ENCODE measurements at regions of chr3 and their contacts with region 1.

Region 1: GRCh38 chr3:45210308-45211041 is 15.6 kb downstream of the TMEM158 start:
- DNase-seq: no peak
- H3K4me3 ChIP-seq: no peak overlapping the region
- H3K27me3 ChIP-seq: no peaks in the 10 kb centered on the region
- CTCF ChIP-seq: peak; percentile 97

Region 2: DNA sequence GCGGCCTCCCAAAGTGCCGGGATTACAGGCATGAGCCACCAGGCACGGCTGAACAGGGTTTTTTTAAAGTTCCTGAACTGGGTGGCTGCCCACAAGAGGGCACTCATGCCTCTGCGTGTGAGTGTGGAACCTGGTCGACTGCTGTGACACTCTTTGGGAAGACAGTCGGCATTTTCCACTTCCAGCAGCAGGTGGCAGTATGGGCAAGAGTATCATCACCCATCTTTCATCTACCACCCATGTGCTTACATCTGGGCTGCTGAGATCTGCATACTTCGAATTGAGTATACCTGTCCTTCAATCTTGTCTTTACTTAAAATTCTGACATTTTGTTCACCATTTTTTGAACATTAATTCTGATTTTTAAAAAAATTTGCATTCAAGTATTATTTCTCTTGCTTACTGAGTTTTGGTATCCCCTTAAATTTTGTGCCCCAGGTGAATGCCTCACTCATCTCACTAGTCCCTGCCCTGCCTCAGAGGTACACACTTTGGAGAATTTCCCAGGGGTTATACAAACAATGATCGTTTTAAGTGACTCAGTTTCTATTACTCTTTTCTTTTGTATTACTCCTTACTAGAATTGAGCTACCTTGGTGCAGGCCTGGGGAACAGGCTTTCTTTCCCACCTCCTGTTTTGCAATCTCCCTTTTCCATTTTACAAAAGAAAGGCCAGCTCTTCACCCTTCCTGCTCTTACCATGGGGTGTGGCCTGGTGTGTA is 172.6 kb before region 1 on chr3:
- CTCF ChIA-PET with region 1: interaction called, 289 read pairs
- POLR2A ChIA-PET with region 1: interaction called, 11 read pairs
- DNase-seq: peak; percentile 59
- H3K4me3 ChIP-seq: no peak overlapping the region
- H3K27me3 ChIP-seq: no peaks in the 10 kb centered on the region
- CTCF ChIP-seq: peak; percentile 89

Region 3: DNA sequence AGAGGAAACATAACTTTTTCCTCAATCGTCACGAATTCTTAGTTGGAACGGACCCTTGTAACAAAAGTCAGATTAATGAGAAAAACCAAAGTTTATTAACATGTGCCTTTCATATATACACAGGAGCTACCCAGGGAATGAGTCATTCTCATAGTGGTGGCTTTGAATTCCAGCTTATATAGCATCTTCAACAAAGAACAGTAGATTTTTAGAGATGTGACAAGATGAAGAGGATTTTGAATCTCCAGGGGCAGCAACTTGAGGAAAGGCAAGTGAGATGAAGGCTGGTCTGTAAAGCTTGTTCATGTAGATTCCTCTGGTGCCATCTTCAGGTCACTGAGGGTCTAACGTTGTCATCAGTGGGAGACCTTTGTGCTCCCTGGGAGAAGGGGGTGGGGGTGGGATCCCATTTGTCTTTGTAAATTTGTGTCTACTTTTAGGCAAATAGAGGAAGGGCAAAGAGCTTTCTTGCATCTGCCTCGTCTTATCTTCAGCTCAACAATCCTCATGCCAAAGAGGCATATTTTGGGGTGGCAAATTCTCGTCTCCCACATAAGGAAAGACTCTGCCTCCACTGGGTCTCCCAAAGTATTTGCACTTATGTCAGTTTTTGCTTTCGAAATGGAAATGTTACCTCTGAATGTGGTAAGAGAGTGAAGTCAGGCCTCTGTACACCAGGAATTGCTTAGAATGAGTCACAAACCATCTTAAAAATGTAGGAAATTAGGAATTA is 154.9 kb before region 1 on chr3:
- CTCF ChIA-PET with region 1: interaction called, 289 read pairs
- POLR2A ChIA-PET with region 1: no interaction called
- DNase-seq: peak; percentile 43
- H3K4me3 ChIP-seq: no peak overlapping the region
- H3K27me3 ChIP-seq: no peaks in the 10 kb centered on the region
- CTCF ChIP-seq: peak; percentile 10; the same call in 1 of the 2 replicates

Region 4: GRCh38 chr3:45140141-45140784 is 70.2 kb before region 1 on chr3:
- CTCF ChIA-PET with region 1: interaction called, 18 read pairs
- POLR2A ChIA-PET with region 1: no interaction called
- DNase-seq: no peak
- H3K4me3 ChIP-seq: no peak overlapping the region
- H3K27me3 ChIP-seq: no peaks in the 10 kb centered on the region
- CTCF ChIP-seq: no peak

Region 5: GRCh38 chr3:45224824-45225464 is 14.5 kb after region 1 on chr3:
- CTCF ChIA-PET with region 1: interaction called, 26 read pairs
- POLR2A ChIA-PET with region 1: no interaction called
- DNase-seq: no peak
- H3K4me3 ChIP-seq: peak overlapping the region; percentile 64
- H3K27me3 ChIP-seq: peaks cover 2% of the 10 kb centered on the region; the same call in 1 of the 2 replicates
- CTCF ChIP-seq: peak; percentile 59

Region 6: GRCh38 chr3:45258317-45258716 is 47.8 kb after region 1 on chr3:
- CTCF ChIA-PET with region 1: no interaction called
- POLR2A ChIA-PET with region 1: no interaction called
- DNase-seq: no peak
- H3K4me3 ChIP-seq: no peak overlapping the region
- H3K27me3 ChIP-seq: no peaks in the 10 kb centered on the region
- CTCF ChIP-seq: no peak

Region 7: DNA sequence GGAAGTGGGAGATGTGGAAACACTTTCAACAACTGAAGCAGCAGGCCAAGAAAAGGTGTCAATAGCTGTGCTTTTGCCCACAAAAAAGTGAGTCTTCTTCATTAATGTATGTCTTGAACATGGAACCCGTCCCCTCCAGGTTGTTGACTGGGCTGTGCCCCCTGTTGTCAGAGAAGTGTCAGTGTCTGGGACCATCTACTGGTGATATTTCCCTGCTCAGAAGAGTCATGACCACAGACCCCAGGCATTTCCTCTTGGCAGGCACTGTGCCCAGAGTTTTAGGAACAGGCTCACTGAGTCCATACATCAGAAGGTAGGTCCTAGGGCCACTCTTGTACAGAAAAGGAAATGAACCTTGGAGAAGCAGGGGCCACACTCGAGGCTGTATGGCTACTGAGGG is 123.1 kb after region 1 on chr3:
- CTCF ChIA-PET with region 1: no interaction called
- POLR2A ChIA-PET with region 1: no interaction called
- DNase-seq: no peak
- H3K4me3 ChIP-seq: no peak overlapping the region
- H3K27me3 ChIP-seq: peaks cover 14% of the 10 kb centered on the region
- CTCF ChIP-seq: no peak